Activated T-helper 2 cell treated with anti-CD3 and anti-CD28 coated beads, Interferon-gamma antibody, Interleukin-2, Interleukin-4, amounts not matched to agents 10 μg/mL and 5 μg/mL and 100 μg/mL, durations not matched to agents 14 hours and 24 hours and 36 hours (primary cell): ENCODE measurements at regions of chr1 and their contacts with region 1.

Region 1: DNA sequence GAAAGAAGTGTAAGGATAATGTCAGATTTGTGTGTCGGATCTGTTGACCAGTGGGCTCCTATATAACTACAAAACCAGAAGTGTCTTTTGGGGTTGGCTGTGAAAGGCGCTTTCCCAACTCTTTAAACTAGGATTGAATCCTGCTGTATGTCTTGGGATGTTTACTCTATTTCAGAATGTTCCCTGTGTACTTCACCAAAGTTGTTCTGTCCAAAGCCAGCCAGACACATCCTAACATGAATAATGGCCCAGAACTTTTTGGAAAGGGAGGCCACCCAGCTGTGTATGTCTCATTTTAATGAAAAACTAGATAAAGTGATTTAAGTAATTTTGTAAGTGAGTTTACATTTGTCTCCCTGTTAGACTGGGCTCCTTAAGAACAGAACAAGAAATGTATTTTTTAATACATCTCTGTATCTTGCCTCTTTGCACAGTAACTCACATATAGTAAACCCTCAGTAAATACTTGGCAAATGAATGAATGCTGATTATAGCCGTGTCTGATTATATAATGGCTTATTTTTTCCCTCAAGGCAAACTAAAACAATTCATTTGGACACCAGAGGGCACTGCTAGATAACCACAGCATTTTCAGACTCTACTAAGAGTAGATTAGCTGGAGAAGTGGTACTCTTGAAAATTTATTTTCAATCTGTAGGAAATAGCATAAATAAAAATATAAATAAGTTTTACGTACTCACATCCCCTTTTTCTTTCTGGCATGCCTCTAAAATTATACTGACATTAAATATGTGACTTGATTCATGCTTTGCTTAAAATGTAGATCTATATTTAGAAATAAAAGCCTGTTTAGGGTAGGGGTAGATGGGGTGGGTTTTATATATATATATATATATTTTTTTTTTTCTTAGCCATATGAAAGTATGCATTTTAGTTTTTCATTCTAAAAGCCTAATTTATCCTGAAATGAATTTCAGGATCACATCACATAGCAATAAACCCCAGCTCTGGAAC is 23.8 kb downstream of the TSEN15 start:
- DNase-seq: no peak
- H3K4me3 Mint-ChIP-seq: no peak overlapping the region
- H3K27ac Mint-ChIP-seq: no peak overlapping the region
- H3K4me1 Mint-ChIP-seq: peaks cover 14% of the 10 kb centered on the region
- H3K27me3 Mint-ChIP-seq: no peaks in the 10 kb centered on the region

Region 2: GRCh38 chr1:183757061-183757460 is 318.3 kb before region 1 on chr1:
- intact Hi-C with region 1: no loop called
- DNase-seq: no peak
- H3K4me3 Mint-ChIP-seq: no peak overlapping the region
- H3K27ac Mint-ChIP-seq: no peak overlapping the region
- H3K4me1 Mint-ChIP-seq: no peaks in the 10 kb centered on the region
- H3K27me3 Mint-ChIP-seq: no peaks in the 10 kb centered on the region

Region 3: DNA sequence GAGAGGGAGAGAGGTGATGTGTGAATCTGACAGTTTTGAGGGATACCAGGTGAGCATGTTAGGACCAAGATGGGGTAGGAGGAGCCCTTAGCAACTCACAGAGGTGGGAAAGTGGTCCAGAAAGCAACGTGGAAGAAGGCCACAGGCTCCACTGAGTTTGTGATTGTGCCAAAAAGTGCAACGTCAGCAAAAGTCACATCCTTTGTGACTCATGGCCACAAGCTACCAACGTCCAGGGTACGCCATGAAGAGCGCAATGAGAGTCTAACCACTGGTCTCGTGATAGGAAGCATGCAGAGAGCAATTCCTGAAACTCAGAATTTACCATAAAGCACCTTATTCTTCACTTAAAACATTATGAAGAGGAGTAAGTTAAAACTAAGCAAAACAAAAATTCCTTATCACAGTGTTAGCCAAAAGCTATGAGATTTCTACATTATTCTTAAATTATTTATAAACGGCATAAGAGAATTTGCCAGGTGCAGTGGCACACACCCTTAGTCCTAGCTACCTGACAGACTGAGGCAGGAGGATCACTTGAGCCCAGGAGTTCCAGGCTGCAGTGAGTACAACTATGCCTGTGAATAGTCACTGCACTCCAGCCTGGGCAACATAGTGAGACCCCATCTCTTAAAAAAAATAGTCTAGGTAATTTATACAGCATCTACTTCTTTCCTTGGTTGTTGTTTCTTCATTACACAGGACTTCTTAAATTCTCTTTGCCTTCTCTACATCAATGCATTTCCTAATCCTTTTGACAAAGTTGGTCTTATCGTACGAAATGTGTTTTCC is 93.0 kb before region 1 on chr1:
- intact Hi-C with region 1: no loop called
- DNase-seq: no peak
- H3K4me3 Mint-ChIP-seq: no peak overlapping the region
- H3K27ac Mint-ChIP-seq: no peak overlapping the region
- H3K4me1 Mint-ChIP-seq: no peaks in the 10 kb centered on the region
- H3K27me3 Mint-ChIP-seq: peaks cover 3% of the 10 kb centered on the region

Region 4: GRCh38 chr1:184222652-184223052 is 147.3 kb after region 1 on chr1:
- intact Hi-C with region 1: loop called (anchors 1 kb)
- DNase-seq: peak; percentile 9
- H3K4me3 Mint-ChIP-seq: no peak overlapping the region
- H3K27ac Mint-ChIP-seq: no peak overlapping the region
- H3K4me1 Mint-ChIP-seq: no peaks in the 10 kb centered on the region
- H3K27me3 Mint-ChIP-seq: peaks cover 8% of the 10 kb centered on the region

Region 5: GRCh38 chr1:184237588-184237987 is 162.2 kb after region 1 on chr1:
- intact Hi-C with region 1: no loop called
- DNase-seq: no peak
- H3K4me3 Mint-ChIP-seq: no peak overlapping the region
- H3K27ac Mint-ChIP-seq: no peak overlapping the region
- H3K4me1 Mint-ChIP-seq: no peaks in the 10 kb centered on the region
- H3K27me3 Mint-ChIP-seq: peaks cover 4% of the 10 kb centered on the region

Region 6: GRCh38 chr1:184494929-184495328 is 419.6 kb after region 1 on chr1:
- intact Hi-C with region 1: loop called (anchors 10 kb)
- DNase-seq: no peak
- H3K4me3 Mint-ChIP-seq: no peak overlapping the region
- H3K27ac Mint-ChIP-seq: no peak overlapping the region
- H3K4me1 Mint-ChIP-seq: peaks cover 30% of the 10 kb centered on the region
- H3K27me3 Mint-ChIP-seq: no peaks in the 10 kb centered on the region

Region 7: DNA sequence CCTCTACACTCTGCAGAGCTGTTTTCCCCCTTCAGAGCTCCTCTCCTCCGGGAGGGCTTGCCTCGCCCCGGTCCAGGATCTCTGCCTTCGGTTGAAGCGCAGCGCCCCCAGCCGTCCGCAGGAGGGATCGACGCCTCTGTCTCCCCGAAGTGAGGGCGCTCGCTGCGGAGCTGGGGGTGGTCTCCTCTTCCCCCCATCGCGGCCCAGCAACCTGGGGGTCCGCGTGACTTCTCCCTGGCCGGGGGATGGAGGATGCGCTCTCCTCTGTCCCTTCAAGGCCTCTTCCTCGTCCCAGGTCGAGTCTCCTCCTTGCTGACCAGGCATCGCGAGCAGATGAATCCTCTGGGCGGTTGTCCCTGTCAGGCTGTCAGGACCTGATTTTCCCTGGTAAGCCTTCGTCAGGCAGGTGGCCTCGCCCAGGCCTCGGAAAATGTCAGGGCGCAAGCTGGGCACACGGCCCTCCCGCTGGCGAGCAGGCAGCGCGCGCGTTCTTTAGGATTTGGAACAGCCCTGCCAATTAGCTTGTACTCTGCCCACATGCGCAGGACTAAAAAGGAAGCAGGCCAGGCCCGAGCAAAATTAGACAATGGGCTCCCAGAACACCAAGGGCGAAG is 588.8 kb after region 1 on chr1:
- intact Hi-C with region 1: loop called (anchors 5 kb)
- DNase-seq: peak; percentile 23
- H3K4me3 Mint-ChIP-seq: peak overlapping the region; percentile 9
- H3K27ac Mint-ChIP-seq: no peak overlapping the region
- H3K4me1 Mint-ChIP-seq: peaks cover 3% of the 10 kb centered on the region
- H3K27me3 Mint-ChIP-seq: peaks cover 35% of the 10 kb centered on the region